Activated CD4-positive, alpha-beta T cell treated with anti-CD3 and anti-CD28 coated beads, Interleukin-2, amount 10 ng/mL, durations not matched to agents 24 days and 14 days (primary cell): ENCODE measurements at regions of chr7 and their contacts with region 1.

Region 1: GRCh38 chr7:91416155-91416865 is 152.1 kb downstream of the FZD1 start:
- DNase-seq: no peak
- H3K4me3 Mint-ChIP-seq: no peak overlapping the region
- H3K27ac Mint-ChIP-seq: no peak overlapping the region
- H3K4me1 Mint-ChIP-seq: no peaks in the 10 kb centered on the region
- H3K27me3 Mint-ChIP-seq: no peaks in the 10 kb centered on the region

Region 2: DNA sequence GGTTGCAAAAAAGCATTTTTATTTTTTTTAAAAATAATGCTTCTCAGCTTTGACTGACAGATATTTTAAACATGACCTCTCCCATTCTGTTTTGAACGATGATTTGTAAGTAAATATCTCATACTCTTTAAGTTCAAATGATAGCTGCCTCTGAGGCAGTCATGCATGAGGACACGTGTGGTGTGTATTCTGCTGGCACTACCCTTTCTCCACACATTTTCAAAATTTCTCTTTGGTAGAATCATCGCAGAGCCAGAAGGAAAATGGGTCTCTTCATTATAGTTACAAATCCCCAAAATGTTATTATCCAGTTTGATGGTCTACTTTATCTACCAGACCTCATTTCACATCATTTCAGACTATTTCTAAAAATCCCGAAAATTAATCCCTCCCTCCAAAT is 97.0 kb before region 1 on chr7:
- intact Hi-C with region 1: loop called (anchors 1 kb)
- DNase-seq: no peak
- H3K4me3 Mint-ChIP-seq: no peak overlapping the region
- H3K27ac Mint-ChIP-seq: no peak overlapping the region
- H3K4me1 Mint-ChIP-seq: no peaks in the 10 kb centered on the region
- H3K27me3 Mint-ChIP-seq: peaks cover 2% of the 10 kb centered on the region